GM10248 (cell line): ENCODE measurements at regions of chr5 and their contacts with region 1.

Region 1: GRCh38 chr5:154196955-154197652 is 6.6 kb downstream of the GALNT10 start:
- DNase-seq: no peak
- CTCF ChIP-seq: peak; percentile 35

Region 2: DNA sequence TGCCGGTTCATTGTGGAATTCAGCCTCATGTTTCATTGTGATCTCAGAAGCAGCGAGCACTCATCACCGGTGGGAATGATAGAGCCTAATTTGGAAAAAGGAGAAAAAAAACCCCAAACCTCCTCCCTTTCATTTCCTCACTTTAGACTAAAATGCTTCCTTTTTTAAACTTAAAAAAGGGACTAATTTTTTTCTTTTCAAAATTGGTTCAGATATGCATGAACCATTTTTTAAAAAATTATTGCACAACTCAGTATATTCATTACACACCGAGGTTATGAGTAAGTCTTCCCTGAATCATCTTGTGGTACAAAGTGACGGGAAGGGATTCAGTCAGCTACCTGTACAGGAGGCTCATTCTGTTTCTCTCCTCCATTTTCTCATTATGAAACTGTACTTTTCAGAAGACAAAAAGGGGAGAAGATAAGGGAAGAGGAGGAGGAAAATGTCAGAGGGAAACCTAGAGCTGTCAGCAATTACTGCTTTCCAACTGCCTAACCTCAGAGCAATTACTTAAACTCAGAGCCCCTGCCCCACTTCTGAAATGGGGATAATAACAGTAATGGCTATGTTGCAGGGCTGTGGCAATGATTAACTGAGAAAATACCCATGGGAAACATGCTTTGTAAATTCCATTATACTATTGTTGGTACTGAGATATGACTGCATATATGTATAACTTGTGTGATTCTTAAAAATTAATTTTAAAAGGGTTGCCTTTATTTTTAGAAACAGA is 17.4 kb after region 1 on chr5:
- CTCF ChIA-PET with region 1: interaction called, 13 read pairs
- POLR2A ChIA-PET with region 1: interaction called, 5 read pairs
- DNase-seq: peak; percentile 46
- CTCF ChIP-seq: no peak

Region 3: DNA sequence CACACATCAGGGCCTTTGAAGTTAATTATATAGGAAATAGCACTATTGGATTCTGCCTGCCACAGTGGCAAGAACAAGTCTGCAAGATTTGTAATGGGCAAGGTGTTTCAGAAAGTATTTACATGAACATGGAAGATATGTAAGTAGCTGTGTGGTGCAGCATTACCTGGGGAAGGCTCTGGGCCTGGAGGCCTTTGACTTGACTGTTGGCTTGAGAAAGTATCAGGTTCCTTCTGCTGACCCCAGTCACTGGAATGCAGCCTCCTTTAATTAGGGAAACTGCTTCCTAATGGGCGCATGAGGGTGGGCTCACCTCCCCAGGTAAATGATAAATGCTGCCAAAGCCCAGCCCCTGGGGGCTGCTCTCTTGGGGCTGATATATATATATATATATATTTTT is 96.1 kb after region 1 on chr5:
- CTCF ChIA-PET with region 1: no interaction called
- POLR2A ChIA-PET with region 1: no interaction called
- DNase-seq: no peak
- CTCF ChIP-seq: no peak

Region 4: GRCh38 chr5:154583545-154584496 is 386.7 kb after region 1 on chr5:
- CTCF ChIA-PET with region 1: no interaction called
- POLR2A ChIA-PET with region 1: no interaction called
- DNase-seq: no peak
- CTCF ChIP-seq: no peak